PC-3 (cell line): ENCODE measurements at regions of chr6 and their contacts with region 1.

Region 1: DNA sequence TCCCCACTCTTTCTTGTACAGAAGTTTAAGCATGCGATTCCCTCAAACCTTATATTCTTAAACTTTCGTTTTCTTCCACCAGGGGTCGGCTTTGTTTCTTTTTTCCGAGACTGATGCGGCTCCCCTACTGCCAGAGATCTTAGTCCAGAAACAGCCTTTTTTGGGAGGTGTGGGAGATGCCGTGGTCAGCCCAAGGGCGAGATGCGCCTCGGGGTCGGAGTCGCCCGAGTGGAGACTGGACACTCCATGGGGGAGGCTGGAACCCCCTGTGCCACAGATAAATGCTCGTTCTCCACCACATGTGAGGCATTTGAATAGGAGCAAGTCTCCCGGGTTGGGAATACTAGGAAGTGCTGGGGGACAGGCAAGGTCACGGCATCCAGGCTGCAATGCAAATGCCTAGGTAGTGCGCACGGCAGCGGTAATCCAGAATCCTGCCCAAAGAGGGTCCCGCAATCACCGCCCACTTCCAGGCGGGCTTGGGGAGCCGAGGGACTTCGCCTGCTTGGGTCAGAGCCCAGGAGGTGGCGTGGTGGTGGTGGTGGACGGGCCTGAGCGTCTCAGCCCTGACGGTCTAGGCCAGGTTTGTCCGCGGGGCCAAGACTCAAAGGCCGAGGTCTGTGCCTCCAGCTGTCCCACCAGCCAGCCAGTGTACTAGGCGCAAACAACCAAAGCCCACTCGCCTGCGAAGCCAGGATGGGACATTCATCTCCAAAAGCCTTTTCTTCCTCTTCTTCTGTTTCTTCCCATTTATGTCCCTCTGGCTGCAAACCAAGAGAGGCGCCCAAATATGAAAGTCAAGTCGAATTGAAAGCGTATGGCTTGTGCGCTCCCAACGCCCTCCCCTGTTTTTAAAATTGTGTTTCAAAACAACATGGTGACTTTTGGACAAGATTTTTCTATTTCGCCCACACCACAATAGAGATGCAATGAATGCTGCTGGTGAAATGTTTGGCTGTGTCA is 39.3 kb upstream of the OSTM1 start:
- DNase-seq: peak; percentile 64
- ATAC-seq: peak; percentile 44
- H3K4me3 ChIP-seq: peak overlapping the region; percentile 13; the same call in 1 of the 2 replicates
- H3K27ac ChIP-seq: no peak overlapping the region
- H3K4me1 ChIP-seq: no peaks in the 10 kb centered on the region
- H3K27me3 ChIP-seq: no peaks in the 10 kb centered on the region
- CTCF ChIP-seq: peak; percentile 70

Region 2: GRCh38 chr6:108222504-108222903 is 108.7 kb after region 1 on chr6:
- CTCF ChIA-PET with region 1: no interaction called
- POLR2A ChIA-PET with region 1: no interaction called
- intact Hi-C with region 1: loop called (anchors 10 kb)
- DNase-seq: no peak
- ATAC-seq: peak; percentile 71
- H3K4me3 ChIP-seq: no peak overlapping the region
- H3K27ac ChIP-seq: no peak overlapping the region
- H3K4me1 ChIP-seq: no peaks in the 10 kb centered on the region
- H3K27me3 ChIP-seq: no peaks in the 10 kb centered on the region
- CTCF ChIP-seq: no peak

Region 3: DNA sequence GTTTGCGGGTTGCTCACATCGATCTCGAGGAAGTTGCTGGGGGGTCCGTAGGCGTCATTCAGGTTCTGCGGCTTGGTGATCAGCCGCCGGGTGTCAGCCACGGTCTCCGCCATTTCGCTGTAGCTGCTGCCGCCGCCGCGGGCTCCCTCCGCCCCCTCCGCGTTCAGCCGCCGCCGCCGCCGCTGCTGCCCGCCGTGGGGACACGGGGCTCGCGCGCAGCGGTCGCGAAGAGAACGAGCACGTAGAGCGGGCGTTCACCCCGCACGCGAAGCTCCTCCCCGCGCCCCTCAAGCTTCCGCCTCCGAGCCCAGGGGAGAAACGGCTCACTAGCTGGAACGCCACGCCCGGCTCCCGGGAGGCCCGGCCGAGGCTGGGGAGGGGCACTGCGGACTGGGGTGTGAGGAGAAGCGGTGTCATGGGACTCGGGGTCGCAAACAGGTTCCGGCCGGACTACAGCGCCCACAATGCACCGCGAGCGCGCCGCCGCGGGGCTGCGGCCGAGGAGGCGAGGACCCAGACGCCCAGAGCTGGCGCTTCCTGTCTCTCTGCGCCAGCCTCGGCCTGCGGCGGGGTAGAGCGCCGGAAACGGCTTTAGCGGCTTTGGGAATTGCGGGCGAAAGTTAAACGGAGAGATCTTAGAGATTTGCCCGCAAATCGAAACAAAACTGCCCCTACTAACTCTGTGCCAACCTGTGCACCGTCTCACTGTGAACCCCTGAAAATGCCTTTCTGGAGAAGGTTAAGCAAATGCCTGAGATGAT is 147.2 kb after region 1 on chr6 and contains the start of gene SNX3:
- CTCF ChIA-PET with region 1: no interaction called
- POLR2A ChIA-PET with region 1: no interaction called
- intact Hi-C with region 1: loop called (anchors 1 kb)
- DNase-seq: peak; percentile 91
- ATAC-seq: peak; percentile 90
- H3K4me3 ChIP-seq: peak within 1 kb of the TSS; percentile 89
- H3K27ac ChIP-seq: peak within 1 kb of the TSS; percentile 72
- H3K4me1 ChIP-seq: peaks cover 6% of the 10 kb centered on the region; the same call in 1 of the 2 replicates
- H3K27me3 ChIP-seq: no peaks in the 10 kb centered on the region
- CTCF ChIP-seq: no peak
- total RNA-seq, gene SNX3: 92.7 and 110 TPM in 2 replicates

Region 4: GRCh38 chr6:108492131-108492766 is 378.4 kb after region 1 on chr6:
- CTCF ChIA-PET with region 1: interaction called, 6 read pairs
- POLR2A ChIA-PET with region 1: no interaction called
- intact Hi-C with region 1: loop called (anchors 1 kb)
- DNase-seq: peak; percentile 57
- ATAC-seq: peak; percentile 60; the same call in 1 of the 2 replicates
- H3K4me3 ChIP-seq: no peak overlapping the region
- H3K27ac ChIP-seq: no peak overlapping the region
- H3K4me1 ChIP-seq: no peaks in the 10 kb centered on the region
- H3K27me3 ChIP-seq: no peaks in the 10 kb centered on the region
- CTCF ChIP-seq: peak; percentile 70

Region 5: GRCh38 chr6:108526739-108527174 is 412.9 kb after region 1 on chr6:
- CTCF ChIA-PET with region 1: no interaction called
- POLR2A ChIA-PET with region 1: no interaction called
- intact Hi-C with region 1: loop called (anchors 2 kb)
- DNase-seq: peak; percentile 58
- ATAC-seq: no peak
- H3K4me3 ChIP-seq: no peak overlapping the region
- H3K27ac ChIP-seq: no peak overlapping the region
- H3K4me1 ChIP-seq: no peaks in the 10 kb centered on the region
- H3K27me3 ChIP-seq: no peaks in the 10 kb centered on the region
- CTCF ChIP-seq: peak; percentile 74

Region 6: DNA sequence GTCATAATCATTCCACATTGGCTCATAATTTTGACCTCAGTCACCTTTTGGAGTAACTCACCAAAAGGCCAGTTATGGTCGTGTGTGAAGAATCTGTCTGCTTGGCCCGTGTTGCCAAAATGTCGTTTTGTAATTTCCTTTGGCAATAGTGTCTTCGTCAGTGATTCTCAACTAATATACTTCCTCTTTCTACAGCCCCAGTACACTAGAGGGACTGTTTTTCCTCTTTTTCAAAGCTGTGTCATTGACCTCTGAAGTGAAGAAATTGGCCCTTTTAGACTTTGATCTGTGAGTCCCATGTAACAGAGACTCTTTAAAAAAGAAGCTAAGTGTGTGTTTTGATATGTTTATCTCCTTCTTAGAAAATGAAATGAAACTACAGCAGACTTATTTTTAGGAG is 452.1 kb after region 1 on chr6:
- CTCF ChIA-PET with region 1: no interaction called
- POLR2A ChIA-PET with region 1: no interaction called
- intact Hi-C with region 1: no loop called
- DNase-seq: peak; percentile 45
- ATAC-seq: no peak
- H3K4me3 ChIP-seq: peak overlapping the region; percentile 95
- H3K27ac ChIP-seq: peak overlapping the region; percentile 79
- H3K4me1 ChIP-seq: peaks cover 33% of the 10 kb centered on the region
- H3K27me3 ChIP-seq: no peaks in the 10 kb centered on the region
- CTCF ChIP-seq: no peak